ENCODE measurements at regions of chr1 and their contacts with region 1.

Region 1: DNA sequence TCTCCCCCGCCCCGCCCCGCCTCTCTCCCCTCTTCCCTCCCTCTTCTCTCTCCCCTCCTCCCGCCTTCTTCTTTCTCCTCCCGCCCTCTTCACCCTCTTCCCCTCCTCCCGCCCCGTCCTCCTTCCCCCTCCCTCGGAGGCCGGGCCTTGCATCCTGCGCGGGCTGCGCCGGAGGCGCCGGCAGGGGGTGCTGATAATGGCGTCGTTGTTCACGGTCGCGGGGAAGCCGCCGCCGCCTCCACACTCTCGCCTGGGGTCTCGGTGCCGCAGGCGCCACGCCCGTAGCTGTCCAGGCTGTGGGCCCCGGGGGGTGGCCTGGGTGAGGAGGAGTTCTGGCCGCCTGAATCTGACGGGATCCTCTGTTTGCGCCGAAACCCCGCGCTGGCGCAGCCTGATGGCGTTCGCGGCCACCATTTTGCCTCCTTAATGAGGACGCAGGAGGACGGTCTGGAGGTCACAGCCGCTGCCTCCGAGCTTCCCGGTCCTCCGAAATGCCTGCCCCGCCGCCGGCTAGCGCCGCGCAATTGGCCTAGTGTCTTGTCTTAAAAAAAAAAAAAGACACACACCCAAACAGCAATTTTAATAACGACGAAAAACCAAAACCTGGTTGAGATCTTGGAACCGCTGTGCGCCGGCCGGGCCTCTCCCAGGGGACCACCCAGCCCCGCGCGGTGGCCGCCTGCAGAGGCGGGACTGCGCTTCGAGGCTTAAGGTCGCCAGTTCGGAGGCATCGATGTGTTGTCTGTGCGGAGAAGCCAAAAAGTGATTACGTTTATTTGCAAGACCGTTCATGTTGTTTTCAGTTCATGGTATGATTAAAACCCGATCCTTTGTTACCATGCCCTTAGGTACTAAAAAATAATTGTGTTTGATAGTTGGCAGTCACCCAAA is 106.6 kb upstream of the HNRNPU start:
- DNase-seq: peak; percentile 96
- H3K4me3 ChIP-seq: peak overlapping the region; percentile 85
- H3K27ac ChIP-seq: peak overlapping the region; percentile 97
- H3K4me1 ChIP-seq: peaks cover 30% of the 10 kb centered on the region
- CTCF ChIP-seq: peak; percentile 75

Region 2: GRCh38 chr1:244652699-244653466 is 318.0 kb before region 1 on chr1 and contains the start of gene DESI2:
- CTCF ChIA-PET with region 1: no interaction called
- POLR2A ChIA-PET with region 1: interaction called, 3 read pairs
- intact Hi-C with region 1: loop called (anchors 2 kb)
- DNase-seq: peak; percentile 100
- H3K4me3 ChIP-seq: peak within 1 kb of the TSS; percentile 82
- H3K27ac ChIP-seq: peak within 1 kb of the TSS; percentile 81
- H3K4me1 ChIP-seq: peaks cover 27% of the 10 kb centered on the region
- CTCF ChIP-seq: peak; percentile 71
- total RNA-seq, gene DESI2: 40.0 and 40.6 TPM in 2 replicates

Region 3: DNA sequence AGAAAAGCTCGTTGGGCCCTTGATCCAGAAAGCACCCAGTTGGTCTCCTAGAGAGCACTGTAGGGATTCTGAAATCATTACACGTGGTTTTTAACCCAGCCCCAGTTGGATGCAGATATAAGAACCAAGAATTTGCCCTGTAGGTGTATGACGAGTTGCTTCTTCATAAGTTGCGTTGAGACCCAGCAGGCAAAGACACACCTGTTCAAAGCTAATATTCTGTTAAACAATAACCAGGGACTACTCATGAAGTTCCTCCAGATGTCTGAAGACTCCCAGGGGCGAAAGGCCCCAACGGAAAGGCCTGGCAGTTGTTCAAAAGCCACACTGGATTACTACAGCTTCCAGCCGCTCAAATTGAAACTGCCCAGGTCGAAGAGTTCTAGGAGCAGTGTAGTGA is 18.0 kb before region 1 on chr1:
- CTCF ChIA-PET with region 1: interaction called, 3 read pairs
- POLR2A ChIA-PET with region 1: interaction called, 22 read pairs
- intact Hi-C with region 1: no loop called
- DNase-seq: no peak
- H3K4me3 ChIP-seq: no peak overlapping the region
- H3K27ac ChIP-seq: no peak overlapping the region
- H3K4me1 ChIP-seq: peaks cover 11% of the 10 kb centered on the region
- CTCF ChIP-seq: no peak

Region 4: DNA sequence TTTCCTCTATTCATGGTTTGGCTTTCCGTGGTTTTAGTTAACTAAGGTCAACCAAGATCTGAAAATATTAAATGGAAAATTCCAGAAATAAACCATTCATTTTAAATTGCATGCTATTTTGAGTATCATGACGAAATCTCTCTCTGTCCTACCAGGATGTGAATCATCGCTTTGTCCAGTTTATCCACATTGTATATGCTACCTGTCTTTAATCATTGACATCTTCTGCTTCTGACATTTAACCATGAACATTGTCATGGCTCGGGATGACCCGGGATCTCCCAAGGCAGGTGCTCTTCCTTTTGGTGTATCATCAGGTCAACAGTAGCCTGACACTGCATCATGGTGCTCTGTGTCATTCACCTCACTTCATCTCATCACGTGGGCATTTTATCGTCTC is 18.9 kb after region 1 on chr1:
- CTCF ChIA-PET with region 1: interaction called, 3 read pairs
- POLR2A ChIA-PET with region 1: interaction called, 14 read pairs
- intact Hi-C with region 1: no loop called
- DNase-seq: no peak
- H3K4me3 ChIP-seq: no peak overlapping the region
- H3K27ac ChIP-seq: no peak overlapping the region
- H3K4me1 ChIP-seq: peaks cover 11% of the 10 kb centered on the region
- CTCF ChIP-seq: no peak

Measured in OCI-LY7 (cell line).